Uterus (tissue), 4 donors: ENCODE measurements at regions of chr9 and their contacts with region 1.

Region 1: GRCh38 chr9:129177791-129178559 is at the start of gene IER5L:
- DNase-seq: peak; percentile 97
- H3K4me3 ChIP-seq: peak within 1 kb of the TSS; percentile 97 to 98
- H3K27ac ChIP-seq: peak within 1 kb of the TSS; percentile 97 to 98
- H3K4me1 ChIP-seq: peaks cover 0 to 8% of the 10 kb centered on the region in 2 donors
- H3K27me3 ChIP-seq: no peaks in the 10 kb centered on the region
- CTCF ChIP-seq: peak in 1 of 4 experiments; percentile 17
- POLR2A ChIP-seq: peak; percentile 98
- total RNA-seq, gene IER5L: 1.8 to 31.0 (median 14.5) TPM

Region 2: GRCh38 chr9:128712451-128713410 is 465.2 kb before region 1 on chr9:
- intact Hi-C with region 1: no loop called
- DNase-seq: no peak
- H3K4me3 ChIP-seq: no peak overlapping the region
- H3K27ac ChIP-seq: no peak overlapping the region
- H3K4me1 ChIP-seq: no peaks in the 10 kb centered on the region
- H3K27me3 ChIP-seq: no peaks in the 10 kb centered on the region
- CTCF ChIP-seq: no peak
- POLR2A ChIP-seq: no peak

Region 3: DNA sequence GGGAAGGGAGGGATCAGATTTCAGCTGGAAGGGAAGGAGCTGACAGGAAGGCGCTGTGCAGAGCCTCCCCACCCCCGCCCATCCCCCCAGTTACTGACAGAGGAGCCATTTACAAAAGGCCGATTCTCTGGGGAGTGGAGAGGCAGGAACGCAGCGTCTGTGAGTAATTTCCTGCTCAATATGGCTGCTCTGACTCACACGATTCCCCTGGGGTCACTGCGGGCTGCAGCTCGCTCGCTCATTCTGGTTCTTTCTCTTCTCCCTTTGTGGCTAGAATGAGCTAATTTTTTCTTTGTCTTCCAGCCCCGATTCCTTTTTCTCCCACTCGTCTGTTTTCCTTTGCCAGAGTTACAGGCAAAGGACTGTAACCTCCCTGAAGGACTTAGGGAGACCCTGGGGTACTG is 38.0 kb before region 1 on chr9:
- intact Hi-C with region 1: loop called (anchors 5 kb)
- DNase-seq: peak; percentile 91 to 99
- H3K4me3 ChIP-seq: peak overlapping the region; percentile 36 to 42
- H3K27ac ChIP-seq: peak overlapping the region; percentile 99 to 100
- H3K4me1 ChIP-seq: peaks cover 22 to 40% of the 10 kb centered on the region in 2 donors
- H3K27me3 ChIP-seq: no peaks in the 10 kb centered on the region
- CTCF ChIP-seq: peak in 2 of 4 experiments; percentile 2 to 25
- POLR2A ChIP-seq: peak; percentile 70 to 73

Region 4: DNA sequence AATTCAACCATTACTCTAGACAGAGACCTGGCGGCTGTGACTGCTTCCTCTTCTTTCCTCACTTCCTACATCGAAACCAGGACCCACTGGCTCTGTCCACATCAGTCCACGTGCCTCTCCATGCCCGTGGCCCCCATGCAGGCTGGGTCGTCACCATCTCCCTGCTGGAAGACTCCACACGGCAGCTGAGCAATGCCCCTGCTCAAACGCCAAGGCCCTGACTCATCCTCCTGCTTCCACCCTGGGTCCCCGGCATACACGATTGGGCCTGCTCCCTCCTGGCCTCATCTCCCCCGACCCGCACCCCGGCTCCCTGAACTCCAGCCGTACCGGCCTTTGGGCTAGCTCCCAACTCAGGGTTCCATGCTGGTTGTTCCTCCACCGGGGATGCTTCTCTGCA is 67.3 kb after region 1 on chr9:
- intact Hi-C with region 1: loop called (anchors 5 kb)
- DNase-seq: peak in 1 of 2 donors; percentile 19
- H3K4me3 ChIP-seq: no peak overlapping the region
- H3K27ac ChIP-seq: no peak overlapping the region
- H3K4me1 ChIP-seq: no peaks in the 10 kb centered on the region
- H3K27me3 ChIP-seq: no peaks in the 10 kb centered on the region
- CTCF ChIP-seq: no peak
- POLR2A ChIP-seq: no peak

Region 5: GRCh38 chr9:129320575-129321263 is 142.7 kb after region 1 on chr9:
- intact Hi-C with region 1: loop called (anchors 10 kb)
- DNase-seq: peak; percentile 73 to 86
- H3K4me3 ChIP-seq: peak overlapping the region; percentile 35 to 37
- H3K27ac ChIP-seq: peak overlapping the region; percentile 95 to 99
- H3K4me1 ChIP-seq: peaks cover 16 to 38% of the 10 kb centered on the region in 2 donors
- H3K27me3 ChIP-seq: no peaks in the 10 kb centered on the region
- CTCF ChIP-seq: peak in 3 of 4 experiments; percentile 15 to 55 (median 25)
- POLR2A ChIP-seq: peak; percentile 74 to 77

Region 6: DNA sequence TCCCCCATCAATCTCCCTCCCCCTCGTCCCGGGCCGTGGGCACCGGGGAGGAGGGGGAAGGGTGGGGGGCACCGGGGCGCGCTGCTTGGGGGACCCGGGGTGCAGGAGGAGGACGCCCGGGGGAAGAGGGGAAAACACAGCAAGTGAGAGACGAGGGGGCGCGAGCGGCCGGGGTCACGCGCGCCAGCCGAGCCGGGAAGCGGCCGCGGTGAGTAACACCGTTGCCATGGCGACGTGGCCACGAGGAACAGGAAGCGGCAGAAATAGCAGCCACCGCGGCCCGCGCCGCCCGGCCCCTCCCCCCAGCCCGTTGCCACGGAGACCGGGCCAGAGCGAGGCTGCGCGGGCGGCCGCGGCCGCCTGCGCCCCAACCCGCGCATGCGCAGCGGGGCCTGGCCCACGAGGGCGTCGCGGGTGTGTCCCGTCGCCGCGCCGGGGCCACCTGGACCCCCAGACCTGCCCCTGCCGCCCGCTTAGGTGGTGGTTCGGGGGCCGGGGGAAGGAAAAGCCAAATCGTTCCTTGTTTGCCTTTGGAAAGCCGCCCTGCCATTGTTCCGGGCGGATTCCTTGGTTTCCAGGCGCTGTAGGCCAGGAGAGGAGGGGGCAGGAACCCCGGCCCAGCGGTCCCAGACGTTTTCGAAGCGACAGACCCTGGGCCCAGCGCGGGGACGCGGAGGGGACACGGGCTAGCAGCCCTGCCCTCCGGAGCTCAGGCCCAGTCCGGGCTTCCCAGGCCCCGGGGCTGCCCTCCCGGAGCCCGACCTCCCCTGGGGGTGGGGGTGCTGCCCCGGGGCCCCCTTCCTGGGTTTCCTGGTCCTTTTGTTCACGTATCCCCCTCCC is 235.8 kb after region 1 on chr9:
- intact Hi-C with region 1: loop called (anchors 10 kb)
- DNase-seq: peak; percentile 99
- H3K4me3 ChIP-seq: peak overlapping the region; percentile 53 to 57
- H3K27ac ChIP-seq: peak overlapping the region; percentile 99
- H3K4me1 ChIP-seq: peaks cover 5 to 16% of the 10 kb centered on the region in 2 donors
- H3K27me3 ChIP-seq: no peaks in the 10 kb centered on the region
- CTCF ChIP-seq: peak in 1 of 4 experiments; percentile 36
- POLR2A ChIP-seq: peak; percentile 98 to 99

Region 7: GRCh38 chr9:129495534-129496325 is 317.8 kb after region 1 on chr9:
- intact Hi-C with region 1: loop called (anchors 10 kb)
- DNase-seq: peak; percentile 95 to 97
- H3K4me3 ChIP-seq: peak overlapping the region; percentile 63 to 67
- H3K27ac ChIP-seq: peak overlapping the region; percentile 98 to 100
- H3K4me1 ChIP-seq: peaks cover 4 to 34% of the 10 kb centered on the region in 2 donors
- H3K27me3 ChIP-seq: no peaks in the 10 kb centered on the region
- CTCF ChIP-seq: peak in 1 of 4 experiments; percentile 11
- POLR2A ChIP-seq: peak; percentile 18 to 39

Region 8: DNA sequence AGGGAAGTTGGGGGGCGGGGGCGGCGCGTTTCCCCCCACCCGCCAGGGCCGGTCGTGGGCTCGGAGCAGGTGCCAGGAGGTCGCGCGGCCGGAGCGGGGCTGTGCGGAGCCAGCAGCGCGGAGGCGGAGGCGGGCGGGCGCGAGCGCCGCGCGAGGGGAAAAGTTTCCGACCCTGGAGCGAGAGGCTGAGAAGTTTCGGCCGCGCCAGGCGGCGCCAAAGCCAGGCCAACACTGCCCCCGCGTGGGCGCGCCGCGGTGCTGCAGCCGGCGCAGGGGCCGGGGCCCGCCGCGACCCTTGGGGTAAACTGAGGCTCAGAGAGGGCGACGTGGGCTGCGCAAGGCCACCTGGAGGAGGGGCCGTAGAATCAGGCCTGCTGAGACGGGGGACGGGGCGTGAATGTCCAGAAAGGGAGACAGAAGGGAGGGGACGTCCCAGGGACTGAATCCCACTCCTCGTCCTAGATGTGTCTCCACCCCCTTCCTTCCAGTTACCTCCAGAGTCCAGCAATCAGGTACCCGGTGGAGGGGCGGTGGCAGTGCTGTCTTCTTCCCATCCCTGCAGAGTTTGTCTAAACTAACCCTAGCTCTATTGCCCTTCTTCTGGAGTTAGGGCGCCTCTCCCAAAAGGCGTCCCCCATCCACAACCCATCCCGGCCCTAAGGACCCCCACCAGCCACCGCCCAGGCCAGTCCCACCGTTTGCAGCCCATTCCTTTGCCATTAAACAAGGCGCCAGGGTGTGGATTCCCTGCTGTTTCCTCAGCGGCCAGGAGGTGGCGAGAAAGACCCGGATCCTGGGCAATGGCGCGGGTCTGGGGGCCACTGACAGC is 432.7 kb after region 1 on chr9:
- intact Hi-C with region 1: loop called (anchors 5 kb)
- DNase-seq: peak; percentile 78 to 85
- H3K4me3 ChIP-seq: peak overlapping the region; percentile 34 to 58
- H3K27ac ChIP-seq: peak overlapping the region; percentile 89 to 90
- H3K4me1 ChIP-seq: peaks cover 0 to 12% of the 10 kb centered on the region in 2 donors
- H3K27me3 ChIP-seq: no peaks in the 10 kb centered on the region
- CTCF ChIP-seq: peak; percentile 65 to 100 (median 98)
- POLR2A ChIP-seq: peak in 1 of 2 donors; percentile 51